AG04449 (cell line): ENCODE measurements at regions of chr6 and their contacts with region 1.

Region 1: DNA sequence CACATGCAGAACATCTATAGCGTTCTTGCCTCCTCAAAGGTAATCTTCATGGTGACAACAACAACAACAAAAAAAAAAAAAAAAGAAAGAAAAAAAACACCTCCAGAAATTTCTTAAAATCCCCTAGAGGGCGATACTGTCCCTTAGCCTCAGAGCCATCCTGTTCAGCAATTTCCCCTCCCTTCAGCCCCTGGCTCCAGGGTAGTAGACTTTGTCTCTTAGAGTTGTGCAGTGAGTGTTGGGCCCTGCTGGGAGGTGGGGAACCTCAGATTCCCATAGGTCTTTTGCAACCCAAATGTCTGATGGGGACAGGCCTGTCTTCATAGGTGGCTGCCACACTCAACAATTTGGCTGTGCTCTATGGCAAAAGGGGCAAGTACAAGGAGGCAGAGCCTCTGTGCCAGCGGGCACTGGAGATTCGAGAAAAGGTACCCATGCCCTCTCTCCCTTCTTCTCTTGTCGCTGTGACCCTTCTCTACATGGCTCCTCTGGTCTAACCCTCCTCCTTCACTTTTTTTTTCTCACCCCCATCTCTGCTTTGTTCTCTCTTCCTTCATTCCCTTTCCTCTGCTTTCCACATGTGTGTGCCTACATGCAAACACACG is 6.0 kb upstream of the PTK7 start:
- DNase-seq: no peak
- H3K4me3 ChIP-seq: no peak overlapping the region
- CTCF ChIP-seq: peak; percentile 44

Region 2: DNA sequence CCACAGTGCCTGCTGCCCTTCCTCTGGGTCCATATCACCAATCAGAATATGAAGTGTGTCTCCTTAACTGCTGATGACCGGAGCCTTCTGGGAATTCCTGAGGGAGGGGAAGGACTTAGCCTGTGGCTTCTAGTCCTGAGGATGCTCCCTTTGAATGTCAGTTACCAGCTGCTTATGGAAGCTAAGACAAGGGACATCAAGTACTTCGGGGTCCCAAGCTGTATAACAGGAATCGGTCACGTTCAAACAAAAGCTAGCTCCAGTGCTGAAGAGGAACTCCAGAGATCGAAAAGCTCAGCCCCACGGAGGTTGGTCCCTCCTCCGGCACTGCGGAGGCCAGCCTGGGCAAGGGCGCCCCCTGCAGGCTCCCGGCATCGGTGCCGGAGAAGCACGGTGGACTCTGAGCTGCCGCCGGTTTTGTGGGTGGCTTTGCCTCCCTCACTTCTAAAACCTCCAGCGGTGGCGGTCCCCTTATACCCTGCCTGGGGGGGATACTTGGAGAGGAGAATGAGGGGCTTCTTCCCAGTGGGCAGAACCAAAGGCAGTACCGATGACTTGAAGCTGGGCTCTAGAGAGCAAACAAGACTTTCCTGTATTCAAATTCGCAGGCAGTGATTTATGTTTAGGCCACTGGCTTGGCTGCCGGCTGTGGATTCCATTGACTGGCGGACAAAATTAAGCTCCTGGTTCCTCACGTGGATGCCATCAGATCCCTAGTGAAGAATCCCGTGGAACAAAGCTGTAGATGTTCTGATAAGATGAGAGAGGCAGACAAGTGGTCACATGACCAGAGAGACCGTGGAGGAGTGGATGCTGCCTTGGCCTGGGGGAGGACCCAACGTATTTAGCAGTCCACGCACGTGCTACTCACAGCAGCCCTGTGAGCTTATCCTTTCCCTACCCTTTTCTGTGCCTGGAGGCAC is 522.5 kb before region 1 on chr6:
- CTCF ChIA-PET with region 1: no interaction called
- POLR2A ChIA-PET with region 1: no interaction called
- DNase-seq: no peak
- H3K4me3 ChIP-seq: peak overlapping the region; percentile 55
- CTCF ChIP-seq: peak; percentile 100

Region 3: DNA sequence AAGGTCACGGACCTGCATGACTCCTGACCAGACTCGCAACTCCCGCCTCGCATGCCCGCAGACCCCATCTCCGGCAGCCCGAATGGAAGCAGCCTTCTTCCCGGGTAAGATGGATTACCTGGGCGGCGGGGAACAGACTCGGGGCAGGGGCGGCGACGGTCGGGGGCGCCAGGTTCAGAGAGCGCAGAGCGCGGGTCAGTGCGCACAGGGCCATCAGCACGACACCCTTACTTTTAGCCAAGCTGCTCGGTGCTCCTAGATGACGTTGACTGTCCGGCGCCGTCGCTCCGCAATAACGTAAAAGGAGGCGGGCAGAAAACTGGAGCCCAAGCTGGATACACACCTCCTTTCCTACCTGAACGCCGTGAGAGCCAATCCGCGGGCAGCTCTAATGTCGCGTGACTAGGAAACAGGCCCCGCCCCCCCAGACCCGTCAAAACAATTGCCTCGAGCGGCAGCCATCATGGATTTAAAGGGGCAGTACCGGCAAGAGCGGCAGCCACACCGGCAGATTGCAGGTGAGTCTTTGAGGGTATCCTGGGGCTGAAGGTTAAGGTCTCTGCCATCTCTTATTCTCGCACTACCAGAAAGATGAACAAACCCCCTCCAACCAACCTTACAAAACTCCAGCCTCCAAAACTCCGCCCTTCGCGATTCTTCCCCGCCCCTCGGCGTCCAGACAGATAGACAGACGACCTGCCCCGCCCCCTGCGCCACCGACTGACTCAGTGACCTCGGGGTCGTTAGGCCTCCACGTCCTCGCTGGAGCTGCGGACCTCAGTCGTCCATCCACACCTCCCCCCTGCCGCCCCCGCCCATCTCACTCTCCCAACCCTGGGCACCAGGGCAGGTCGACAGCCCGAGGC is 10.7 kb before region 1 on chr6 and contains the starts of genes KLC4 and MRPL2:
- CTCF ChIA-PET with region 1: interaction called, 33 read pairs
- POLR2A ChIA-PET with region 1: no interaction called
- DNase-seq: peak; percentile 90
- H3K4me3 ChIP-seq: peak within 1 kb of the TSS; percentile 98
- CTCF ChIP-seq: no peak

Region 4: GRCh38 chr6:43120944-43121913 is 51.1 kb after region 1 on chr6:
- CTCF ChIA-PET with region 1: interaction called, 32 read pairs
- POLR2A ChIA-PET with region 1: interaction called, 4 read pairs
- DNase-seq: peak; percentile 99
- H3K4me3 ChIP-seq: peak overlapping the region; percentile 37
- CTCF ChIP-seq: peak; percentile 17

Region 5: DNA sequence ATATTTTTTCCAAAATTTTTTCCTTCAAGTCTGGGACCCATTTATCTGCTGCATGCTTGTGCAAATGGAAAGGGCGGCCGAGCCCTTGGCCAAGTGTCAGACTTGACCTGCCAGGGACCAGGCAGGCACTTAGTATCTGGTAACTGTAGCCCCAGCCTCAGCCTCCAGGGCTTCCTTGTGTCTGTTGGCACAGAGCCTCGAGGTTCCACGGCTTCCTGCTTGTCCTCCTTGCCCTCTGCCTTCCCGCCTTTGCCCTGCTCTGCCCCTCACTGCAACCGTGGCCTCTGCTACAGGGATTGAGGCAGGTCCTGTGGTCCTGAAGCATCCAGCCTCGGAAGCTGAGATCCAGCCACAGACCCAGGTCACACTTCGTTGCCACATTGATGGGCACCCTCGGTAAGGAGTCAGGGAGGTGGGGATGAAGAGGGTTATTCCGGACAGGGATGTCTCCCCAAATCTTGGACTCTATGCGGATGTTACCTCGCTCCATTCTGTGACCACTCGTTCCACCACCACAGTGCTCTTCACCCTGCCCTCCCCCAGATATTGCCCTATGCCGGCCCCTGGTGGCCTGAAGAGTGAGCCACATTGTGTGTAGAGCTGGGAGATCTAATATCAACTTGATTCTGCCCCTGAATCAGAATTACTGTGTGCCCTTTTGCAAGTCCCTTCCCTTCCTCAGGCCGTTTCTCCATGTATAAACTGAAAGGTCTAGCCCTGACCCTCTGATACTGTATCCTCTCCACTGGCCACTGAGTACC is 59.5 kb after region 1 on chr6:
- CTCF ChIA-PET with region 1: interaction called, 37 read pairs
- POLR2A ChIA-PET with region 1: interaction called, 4 read pairs
- DNase-seq: no peak
- H3K4me3 ChIP-seq: no peak overlapping the region
- CTCF ChIP-seq: peak; percentile 64